ENCODE measurements at regions of chr1 and their contacts with region 1.

Region 1: GRCh38 chr1:44730741-44731512 is at the start of gene RNU5D-1:
- DNase-seq: peak; percentile 97
- ATAC-seq: peak; percentile 84
- H3K4me3 Mint-ChIP-seq: peak within 1 kb of the TSS; percentile 62
- H3K27ac Mint-ChIP-seq: peak within 1 kb of the TSS; percentile 98
- H3K4me1 Mint-ChIP-seq: peaks cover 33% of the 10 kb centered on the region
- H3K27me3 Mint-ChIP-seq: no peaks in the 10 kb centered on the region
- total RNA-seq, gene RNU5D-1: not detected

Region 2: GRCh38 chr1:44714944-44715571 is 15.9 kb before region 1 on chr1:
- CTCF ChIA-PET with region 1: interaction called, 52 read pairs
- DNase-seq: peak; percentile 83
- ATAC-seq: peak; percentile 80
- H3K4me3 Mint-ChIP-seq: peak overlapping the region; percentile 45
- H3K27ac Mint-ChIP-seq: peak overlapping the region; percentile 82
- H3K4me1 Mint-ChIP-seq: peaks cover 43% of the 10 kb centered on the region
- H3K27me3 Mint-ChIP-seq: peaks cover 13% of the 10 kb centered on the region

Region 3: GRCh38 chr1:44743211-44743610 is 12.3 kb after region 1 on chr1:
- CTCF ChIA-PET with region 1: interaction called, 11 read pairs
- DNase-seq: no peak
- ATAC-seq: no peak
- H3K4me3 Mint-ChIP-seq: peak overlapping the region; percentile 29
- H3K27ac Mint-ChIP-seq: peak overlapping the region; percentile 21
- H3K4me1 Mint-ChIP-seq: peaks cover 52% of the 10 kb centered on the region
- H3K27me3 Mint-ChIP-seq: no peaks in the 10 kb centered on the region

Region 4: GRCh38 chr1:44775078-44775929 is 44.4 kb after region 1 on chr1 and contains the start of gene RPS8:
- CTCF ChIA-PET with region 1: interaction called, 19 read pairs
- DNase-seq: peak; percentile 95
- ATAC-seq: peak; percentile 81
- H3K4me3 Mint-ChIP-seq: peak within 1 kb of the TSS; percentile 93
- H3K27ac Mint-ChIP-seq: peak within 1 kb of the TSS; percentile 93
- H3K4me1 Mint-ChIP-seq: peaks cover 37% of the 10 kb centered on the region
- H3K27me3 Mint-ChIP-seq: no peaks in the 10 kb centered on the region
- total RNA-seq, gene RPS8: 1,353 to 1,538 TPM

Region 5: GRCh38 chr1:44807262-44808062 is 76.5 kb after region 1 on chr1 and contains the start of gene DYNLT4:
- CTCF ChIA-PET with region 1: interaction called, 18 read pairs
- DNase-seq: peak; percentile 97
- ATAC-seq: peak; percentile 56
- H3K4me3 Mint-ChIP-seq: peak within 1 kb of the TSS; percentile 64
- H3K27ac Mint-ChIP-seq: peak within 1 kb of the TSS; percentile 99
- H3K4me1 Mint-ChIP-seq: peaks cover 69% of the 10 kb centered on the region
- H3K27me3 Mint-ChIP-seq: no peaks in the 10 kb centered on the region
- total RNA-seq, gene DYNLT4: 0.40 to 1.3 TPM

Region 6: GRCh38 chr1:44812822-44813543 is 82.1 kb after region 1 on chr1:
- CTCF ChIA-PET with region 1: interaction called, 18 read pairs
- DNase-seq: no peak
- ATAC-seq: no peak
- H3K4me3 Mint-ChIP-seq: peak overlapping the region; percentile 90
- H3K27ac Mint-ChIP-seq: peak overlapping the region; percentile 22
- H3K4me1 Mint-ChIP-seq: peaks cover 56% of the 10 kb centered on the region
- H3K27me3 Mint-ChIP-seq: no peaks in the 10 kb centered on the region

Region 7: GRCh38 chr1:44819608-44820327 is 88.8 kb after region 1 on chr1:
- CTCF ChIA-PET with region 1: interaction called, 18 read pairs
- DNase-seq: peak; percentile 95
- ATAC-seq: peak; percentile 90
- H3K4me3 Mint-ChIP-seq: peak overlapping the region; percentile 83
- H3K27ac Mint-ChIP-seq: peak overlapping the region; percentile 100
- H3K4me1 Mint-ChIP-seq: peaks cover 43% of the 10 kb centered on the region
- H3K27me3 Mint-ChIP-seq: no peaks in the 10 kb centered on the region

Measured in activated CD8-positive, alpha-beta memory T cell treated with anti-CD3 and anti-CD28 coated beads, Interleukin-2, amount 10 ng/mL, durations not matched to agents 7 days and 5 days (primary cell).